ENCODE measurements at regions of chrX and their contacts with region 1.

Region 1: DNA sequence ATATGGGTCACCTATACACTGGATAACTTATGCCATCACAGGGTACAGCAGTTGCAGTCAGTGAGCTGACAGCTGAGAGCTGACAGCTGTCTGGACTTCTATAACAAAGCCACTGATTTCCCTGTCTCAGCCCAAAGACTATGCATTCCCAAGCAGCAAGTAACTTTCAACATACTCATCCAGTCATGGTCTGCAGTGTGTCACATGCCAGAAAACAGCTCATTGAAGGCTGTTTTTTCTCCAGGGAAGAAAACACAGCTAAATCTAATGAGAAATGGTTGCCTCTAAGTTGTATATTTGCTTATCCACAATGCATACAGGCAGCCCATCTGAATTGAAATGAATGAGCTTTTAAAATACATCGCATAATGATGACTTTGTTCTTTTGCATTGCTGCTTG is 6.3 kb downstream of the KIAA1210 start:
- DNase-seq: no peak
- H3K4me3 ChIP-seq: no peak overlapping the region
- H3K27ac ChIP-seq: no peak overlapping the region
- H3K4me1 ChIP-seq: no peaks in the 10 kb centered on the region
- H3K27me3 ChIP-seq: no peaks in the 10 kb centered on the region
- CTCF ChIP-seq: no peak

Region 2: DNA sequence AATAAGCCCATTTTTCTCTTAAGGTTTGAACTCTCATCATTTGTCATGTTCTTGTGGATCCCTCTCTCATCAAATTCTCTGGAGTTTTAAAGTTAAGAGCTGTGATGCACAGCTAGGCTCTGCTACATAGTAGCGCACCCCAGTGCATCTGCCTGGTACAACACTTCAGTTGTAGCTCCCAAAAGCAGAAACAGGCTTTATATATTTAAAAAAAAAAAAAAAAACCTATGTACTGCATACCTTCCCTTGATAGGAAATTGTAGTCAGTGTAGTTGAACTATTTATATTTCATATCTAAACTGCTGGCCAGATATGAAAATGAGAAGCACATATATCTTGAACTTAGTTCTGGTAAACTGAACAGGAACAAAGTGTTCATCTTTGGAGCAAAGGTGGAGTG is 1136.1 kb before region 1 on chrX:
- CTCF ChIA-PET with region 1: no interaction called
- POLR2A ChIA-PET with region 1: no interaction called
- intact Hi-C with region 1: no loop called
- DNase-seq: peak; percentile 69
- H3K4me3 ChIP-seq: no peak overlapping the region
- H3K27ac ChIP-seq: no peak overlapping the region
- H3K4me1 ChIP-seq: peaks cover 27% of the 10 kb centered on the region
- H3K27me3 ChIP-seq: no peaks in the 10 kb centered on the region
- CTCF ChIP-seq: peak; percentile 58

Region 3: DNA sequence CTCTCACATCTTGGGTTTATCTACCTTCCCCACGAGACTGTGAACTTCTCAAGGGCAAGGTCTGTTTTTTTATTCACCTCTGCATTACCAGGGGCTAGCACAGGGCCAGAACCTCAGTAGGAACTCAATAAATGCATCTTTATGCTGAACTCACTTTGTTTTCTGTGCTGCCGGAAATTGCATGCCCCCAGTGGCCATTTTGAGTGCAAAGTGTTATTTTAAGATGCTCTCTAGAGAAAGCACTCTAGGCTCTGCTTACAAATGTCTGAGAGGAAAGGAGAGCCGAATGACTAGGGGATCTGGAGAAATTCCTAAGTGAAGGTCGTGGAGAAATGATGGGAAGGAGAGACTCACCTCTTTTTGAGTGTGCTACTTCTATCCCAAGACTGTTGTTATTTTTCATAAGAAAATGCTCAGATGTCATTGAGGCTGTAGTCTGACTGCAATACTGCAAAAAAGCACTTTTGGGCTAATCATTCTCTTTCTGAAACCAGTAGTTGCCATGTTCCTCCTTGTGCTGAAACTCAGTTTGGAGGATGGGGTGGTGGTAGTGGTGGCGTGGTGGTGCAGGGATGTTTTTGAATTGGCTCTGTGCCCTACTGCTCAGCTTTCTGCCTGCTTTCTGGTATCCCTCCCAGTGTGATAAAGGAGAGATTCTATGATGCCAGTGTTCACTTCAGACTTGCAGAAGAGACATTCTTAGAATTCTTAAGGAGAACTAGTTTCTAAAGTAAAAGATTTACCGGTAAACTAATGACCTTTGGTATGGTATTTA is 584.5 kb before region 1 on chrX:
- CTCF ChIA-PET with region 1: no interaction called
- POLR2A ChIA-PET with region 1: no interaction called
- intact Hi-C with region 1: no loop called
- DNase-seq: peak; percentile 42
- H3K4me3 ChIP-seq: no peak overlapping the region
- H3K27ac ChIP-seq: no peak overlapping the region
- H3K4me1 ChIP-seq: no peaks in the 10 kb centered on the region
- H3K27me3 ChIP-seq: no peaks in the 10 kb centered on the region
- CTCF ChIP-seq: peak; percentile 56

Region 4: GRCh38 chrX:118823263-118824172 is 297.8 kb before region 1 on chrX and contains the start of gene ZCCHC12:
- CTCF ChIA-PET with region 1: no interaction called
- POLR2A ChIA-PET with region 1: no interaction called
- intact Hi-C with region 1: no loop called
- DNase-seq: peak; percentile 84
- H3K4me3 ChIP-seq: peak within 1 kb of the TSS; percentile 36
- H3K27ac ChIP-seq: no peak within 1 kb of the TSS
- H3K4me1 ChIP-seq: no peaks in the 10 kb centered on the region
- H3K27me3 ChIP-seq: no peaks in the 10 kb centered on the region
- CTCF ChIP-seq: no peak
- total RNA-seq, gene ZCCHC12: 1.2 TPM in 2 replicates

Region 5: GRCh38 chrX:119266364-119266995 is 145.1 kb after region 1 on chrX:
- CTCF ChIA-PET with region 1: no interaction called
- POLR2A ChIA-PET with region 1: no interaction called
- intact Hi-C with region 1: loop called (anchors 5 kb)
- DNase-seq: peak; percentile 36
- H3K4me3 ChIP-seq: no peak overlapping the region
- H3K27ac ChIP-seq: no peak overlapping the region
- H3K4me1 ChIP-seq: no peaks in the 10 kb centered on the region
- H3K27me3 ChIP-seq: no peaks in the 10 kb centered on the region
- CTCF ChIP-seq: peak; percentile 88

Region 6: GRCh38 chrX:119488749-119489148 is 367.4 kb after region 1 on chrX:
- CTCF ChIA-PET with region 1: no interaction called
- POLR2A ChIA-PET with region 1: no interaction called
- intact Hi-C with region 1: no loop called
- DNase-seq: peak; percentile 58
- H3K4me3 ChIP-seq: no peak overlapping the region
- H3K27ac ChIP-seq: no peak overlapping the region
- H3K4me1 ChIP-seq: no peaks in the 10 kb centered on the region
- H3K27me3 ChIP-seq: no peaks in the 10 kb centered on the region
- CTCF ChIP-seq: peak; percentile 66

Measured in A673 (cell line).